Aorta (tissue), 5 donors: ENCODE measurements at regions of chr20 and their contacts with region 1.

Region 1: DNA sequence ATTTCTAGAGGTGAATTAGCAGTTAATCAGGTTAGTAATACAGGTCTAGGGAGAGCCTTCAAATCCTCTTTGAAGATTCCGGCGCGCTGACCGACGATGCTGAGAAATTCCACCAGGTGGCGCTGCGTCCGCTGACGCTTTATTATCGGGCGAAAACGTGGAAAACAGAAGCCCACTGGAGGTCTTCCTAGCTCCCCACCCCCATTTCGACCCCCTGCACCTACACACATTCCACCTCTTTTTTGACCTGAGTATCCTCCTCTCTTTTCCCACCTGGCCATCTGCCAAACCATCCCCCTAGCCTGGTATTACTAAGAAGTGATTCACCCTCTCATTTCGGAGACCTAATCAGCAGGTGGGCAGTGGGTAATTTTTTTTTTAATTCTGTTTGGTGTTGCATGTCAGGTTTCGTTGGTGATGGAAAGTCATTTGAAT is 65.4 kb upstream of the RIN2 start:
- DNase-seq: peak in 1 of 2 donors; percentile 90
- ATAC-seq: peak; percentile 73
- H3K4me3 ChIP-seq: no peak overlapping the region
- H3K27ac ChIP-seq: no peak overlapping the region
- H3K4me1 ChIP-seq: no peaks in the 10 kb centered on the region
- H3K27me3 ChIP-seq: no peaks in the 10 kb centered on the region

Region 2: DNA sequence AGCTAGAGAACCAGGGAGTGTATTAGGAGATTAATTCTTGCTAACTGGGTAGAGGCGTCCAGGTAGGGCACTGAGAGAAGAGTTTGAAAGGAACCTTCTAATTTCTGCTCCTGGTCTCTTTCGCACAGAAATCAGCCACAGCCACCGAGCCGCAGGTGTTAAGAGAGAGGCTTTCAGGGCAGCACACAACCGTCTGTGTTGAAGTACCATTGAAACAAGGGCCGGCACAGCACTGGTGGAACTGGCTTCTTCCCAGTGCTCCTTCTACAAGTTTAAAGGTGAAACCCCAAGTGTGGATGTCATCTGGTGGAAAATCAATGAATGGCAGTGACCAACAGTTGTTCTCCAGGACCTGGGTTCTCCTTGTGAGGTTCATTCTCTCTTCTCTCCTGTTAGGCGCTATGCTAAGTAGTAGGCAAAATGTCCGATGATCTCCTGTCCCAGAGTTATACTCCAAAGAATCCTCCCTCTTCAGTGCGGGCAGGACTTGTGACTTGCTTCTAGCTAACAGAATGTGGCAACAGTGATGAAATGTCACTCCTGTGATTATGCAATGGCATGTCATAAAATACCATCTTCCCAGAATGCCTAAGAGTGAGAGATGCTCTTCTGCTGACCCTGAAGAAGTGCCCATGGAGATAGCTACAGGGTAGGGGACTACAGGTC is 50.4 kb after region 1 on chr20:
- intact Hi-C with region 1: loop called in 1 of 2 experiments (anchors 10 kb)
- DNase-seq: no peak
- ATAC-seq: no peak
- H3K4me3 ChIP-seq: no peak overlapping the region
- H3K27ac ChIP-seq: no peak overlapping the region
- H3K4me1 ChIP-seq: no peaks in the 10 kb centered on the region
- H3K27me3 ChIP-seq: no peaks in the 10 kb centered on the region

Region 3: DNA sequence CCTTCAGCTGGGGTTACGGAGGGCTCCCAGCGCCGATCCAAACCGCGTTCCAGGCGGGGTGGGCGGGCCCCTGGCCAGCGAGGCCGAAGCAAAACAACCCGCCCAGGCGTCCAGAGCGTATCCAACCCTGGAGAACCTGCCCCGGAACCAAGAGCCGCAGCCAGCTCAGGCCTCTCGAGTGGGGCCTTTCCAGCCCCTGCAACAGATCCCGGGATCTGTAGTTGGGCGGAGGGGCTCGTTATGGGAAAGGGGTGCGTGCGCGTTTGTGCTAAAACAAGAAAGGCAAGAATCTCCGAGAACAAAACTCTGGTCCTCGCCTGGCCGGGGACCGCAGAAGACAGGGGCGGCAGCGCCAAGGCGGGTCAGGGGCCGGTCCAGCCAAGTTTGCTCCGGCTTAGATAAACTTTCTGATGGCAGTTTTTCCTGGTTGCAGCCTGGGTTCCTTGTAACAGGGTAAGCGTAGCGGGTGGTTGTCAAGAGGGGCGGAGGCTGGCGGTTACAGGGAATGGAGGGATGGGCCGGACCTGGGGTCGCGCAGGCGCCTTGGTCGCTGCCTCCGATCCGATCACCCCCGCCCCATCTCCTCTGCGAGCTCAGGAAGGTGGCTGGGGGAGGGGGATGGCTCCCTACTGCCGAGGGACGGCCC is 64.9 kb after region 1 on chr20:
- intact Hi-C with region 1: loop called in 1 of 2 experiments (anchors 5 kb)
- DNase-seq: peak; percentile 94 to 95
- ATAC-seq: peak; percentile 94
- H3K4me3 ChIP-seq: peak overlapping the region; percentile 59 to 90
- H3K27ac ChIP-seq: peak overlapping the region; percentile 15 to 88
- H3K4me1 ChIP-seq: no peaks in the 10 kb centered on the region
- H3K27me3 ChIP-seq: no peaks in the 10 kb centered on the region

Region 4: GRCh38 chr20:19784511-19785172 is 91.9 kb after region 1 on chr20:
- intact Hi-C with region 1: loop called (anchors 2 to 10 kb)
- DNase-seq: peak in 1 of 2 donors; percentile 70
- ATAC-seq: peak; percentile 93
- H3K4me3 ChIP-seq: no peak overlapping the region
- H3K27ac ChIP-seq: no peak overlapping the region
- H3K4me1 ChIP-seq: peaks cover 0 to 3% of the 10 kb centered on the region in 2 donors
- H3K27me3 ChIP-seq: no peaks in the 10 kb centered on the region

Region 5: DNA sequence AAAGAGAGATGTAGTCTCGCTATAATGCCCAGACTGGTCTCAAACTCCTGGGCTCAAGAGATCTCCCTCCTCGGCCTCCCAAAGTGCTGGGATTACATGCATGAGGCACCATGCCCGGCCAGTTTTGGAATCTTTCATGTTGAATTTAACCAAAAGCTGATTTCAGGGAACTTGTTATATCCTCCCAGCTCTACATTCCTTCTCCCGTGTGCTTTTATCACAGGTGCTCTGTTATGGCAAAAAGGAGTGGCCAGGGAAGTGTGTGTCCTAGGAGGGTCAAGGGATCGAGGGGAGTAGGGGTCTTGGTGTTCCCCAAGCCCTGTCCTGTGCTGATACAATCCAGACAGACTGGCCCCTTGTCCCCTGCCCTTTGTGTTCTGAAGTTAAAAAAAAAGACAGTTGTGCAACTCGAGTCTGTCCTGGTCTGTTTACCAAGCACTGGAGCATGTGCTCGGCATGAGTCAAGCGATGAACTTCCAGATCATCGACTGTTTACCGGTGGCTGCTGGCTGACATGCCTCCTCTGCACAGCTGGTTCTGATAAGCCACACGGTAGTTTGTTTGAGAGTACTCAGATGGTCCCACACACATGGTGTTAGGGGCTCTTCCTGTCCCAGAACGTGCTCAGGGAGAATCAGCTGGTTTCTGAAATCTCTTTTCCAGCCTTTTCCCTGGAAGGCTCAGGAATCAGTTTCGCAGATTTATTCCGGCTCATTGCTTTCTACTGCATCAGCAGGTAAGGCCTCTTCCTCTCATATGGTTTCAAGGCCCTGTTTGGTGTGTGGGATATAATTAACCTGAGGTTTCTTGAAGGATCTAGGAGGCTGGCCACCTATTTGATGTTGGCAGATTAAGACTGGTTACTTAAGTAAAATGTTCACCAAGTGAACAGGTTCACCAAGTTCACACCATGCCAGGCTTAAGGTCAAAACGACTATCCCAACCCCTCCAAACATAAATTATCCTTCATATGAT is 271.9 kb after region 1 on chr20:
- intact Hi-C with region 1: no loop called
- DNase-seq: peak in 1 of 2 donors; percentile 70
- ATAC-seq: peak; percentile 79
- H3K4me3 ChIP-seq: no peak overlapping the region
- H3K27ac ChIP-seq: no peak overlapping the region
- H3K4me1 ChIP-seq: no peaks in the 10 kb centered on the region
- H3K27me3 ChIP-seq: no peaks in the 10 kb centered on the region

Region 6: DNA sequence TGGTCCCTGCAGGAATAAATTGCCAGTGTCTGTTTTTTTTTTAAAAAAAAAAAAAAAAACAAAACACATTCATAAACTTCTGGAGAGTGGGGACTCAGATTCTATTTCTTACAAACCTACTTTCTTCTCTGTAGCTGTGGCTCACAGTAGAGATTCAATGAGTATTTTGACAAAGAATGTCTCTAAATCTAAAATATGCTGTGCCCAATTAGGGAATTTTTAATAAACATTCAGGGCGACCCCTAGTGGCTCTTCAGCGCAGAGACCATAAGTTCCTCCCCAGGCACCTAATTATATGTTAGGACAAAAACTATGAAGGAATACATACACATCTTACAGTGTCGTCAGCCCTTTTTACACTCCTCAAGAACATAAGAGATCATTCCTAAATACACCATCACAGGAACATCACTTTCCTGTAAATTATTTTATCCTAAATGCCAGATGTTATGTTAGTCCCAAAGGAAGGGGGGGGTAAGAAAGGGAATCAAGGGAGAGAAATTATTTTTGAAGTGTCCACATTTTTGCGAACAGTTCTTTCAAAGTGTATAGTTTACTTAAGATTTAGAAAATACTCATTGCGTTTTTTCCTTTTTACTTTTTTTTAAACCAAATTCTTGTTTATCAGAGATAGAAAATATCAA is 302.6 kb after region 1 on chr20:
- intact Hi-C with region 1: loop called (anchors 5 kb)
- DNase-seq: no peak
- ATAC-seq: peak; percentile 75
- H3K4me3 ChIP-seq: no peak overlapping the region
- H3K27ac ChIP-seq: no peak overlapping the region
- H3K4me1 ChIP-seq: peaks cover 1 to 5% of the 10 kb centered on the region in 2 donors
- H3K27me3 ChIP-seq: no peaks in the 10 kb centered on the region